Activated CD8-positive, alpha-beta T cell treated with anti-CD3 and anti-CD28 coated beads for 36 hours (primary cell): ENCODE measurements at regions of chr20 and their contacts with region 1.

Region 1: GRCh38 chr20:32207626-32208498 is at the starts of genes PLAGL2 and POFUT1:
- DNase-seq: peak; percentile 91
- ATAC-seq: peak; percentile 79
- H3K4me3 Mint-ChIP-seq: peak within 1 kb of the TSS; percentile 99
- H3K27ac Mint-ChIP-seq: peak within 1 kb of the TSS; percentile 92
- H3K4me1 Mint-ChIP-seq: peaks cover 59% of the 10 kb centered on the region
- H3K27me3 Mint-ChIP-seq: no peaks in the 10 kb centered on the region
- CTCF ChIP-seq: no peak
- total RNA-seq, gene PLAGL2: 70.6 to 71.5 TPM
- total RNA-seq, gene POFUT1: 43.7 to 46.2 TPM

Region 2: DNA sequence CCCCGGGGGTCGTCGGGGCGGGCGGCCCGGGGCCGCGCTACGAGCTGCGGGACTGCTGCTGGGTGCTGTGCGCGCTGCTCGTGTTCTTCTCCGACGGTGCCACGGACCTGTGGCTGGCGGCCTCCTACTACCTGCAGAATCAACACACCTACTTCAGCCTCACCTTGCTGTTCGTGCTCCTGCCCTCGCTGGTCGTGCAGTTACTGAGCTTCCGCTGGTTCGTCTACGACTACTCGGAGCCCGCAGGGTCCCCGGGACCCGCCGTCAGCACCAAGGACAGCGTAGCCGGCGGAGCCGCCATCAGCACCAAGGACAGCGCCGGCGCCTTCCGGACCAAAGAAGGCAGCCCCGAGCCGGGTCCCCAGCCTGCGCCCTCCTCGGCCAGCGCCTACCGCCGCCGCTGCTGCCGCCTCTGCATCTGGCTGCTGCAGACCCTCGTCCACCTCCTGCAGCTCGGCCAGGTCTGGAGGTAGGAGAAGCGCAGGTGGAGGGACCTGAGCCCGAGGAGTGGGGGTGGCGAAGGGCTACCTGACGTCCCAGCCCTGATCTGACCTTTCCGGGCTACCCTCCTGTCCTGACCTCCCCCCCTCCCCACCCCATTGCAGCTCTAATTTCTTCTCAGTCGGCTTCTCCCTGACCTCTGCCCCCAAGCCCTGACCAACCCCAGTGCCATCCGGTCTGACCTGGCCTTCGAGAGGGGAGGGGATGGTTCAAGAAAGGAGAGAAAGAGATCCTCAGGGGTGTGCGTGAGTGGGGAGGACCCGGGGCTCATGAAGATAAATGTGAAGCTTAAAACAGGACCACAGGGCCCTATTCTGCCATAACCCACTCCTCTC is 239.4 kb before region 1 on chr20:
- CTCF ChIA-PET with region 1: no interaction called
- POLR2A ChIA-PET with region 1: no interaction called
- intact Hi-C with region 1: no loop called
- DNase-seq: peak; percentile 83
- ATAC-seq: peak; percentile 96
- H3K4me3 Mint-ChIP-seq: peak overlapping the region; percentile 73
- H3K27ac Mint-ChIP-seq: no peak overlapping the region
- H3K4me1 Mint-ChIP-seq: peaks cover 3% of the 10 kb centered on the region
- H3K27me3 Mint-ChIP-seq: peaks cover 42% of the 10 kb centered on the region
- CTCF ChIP-seq: no peak

Region 3: DNA sequence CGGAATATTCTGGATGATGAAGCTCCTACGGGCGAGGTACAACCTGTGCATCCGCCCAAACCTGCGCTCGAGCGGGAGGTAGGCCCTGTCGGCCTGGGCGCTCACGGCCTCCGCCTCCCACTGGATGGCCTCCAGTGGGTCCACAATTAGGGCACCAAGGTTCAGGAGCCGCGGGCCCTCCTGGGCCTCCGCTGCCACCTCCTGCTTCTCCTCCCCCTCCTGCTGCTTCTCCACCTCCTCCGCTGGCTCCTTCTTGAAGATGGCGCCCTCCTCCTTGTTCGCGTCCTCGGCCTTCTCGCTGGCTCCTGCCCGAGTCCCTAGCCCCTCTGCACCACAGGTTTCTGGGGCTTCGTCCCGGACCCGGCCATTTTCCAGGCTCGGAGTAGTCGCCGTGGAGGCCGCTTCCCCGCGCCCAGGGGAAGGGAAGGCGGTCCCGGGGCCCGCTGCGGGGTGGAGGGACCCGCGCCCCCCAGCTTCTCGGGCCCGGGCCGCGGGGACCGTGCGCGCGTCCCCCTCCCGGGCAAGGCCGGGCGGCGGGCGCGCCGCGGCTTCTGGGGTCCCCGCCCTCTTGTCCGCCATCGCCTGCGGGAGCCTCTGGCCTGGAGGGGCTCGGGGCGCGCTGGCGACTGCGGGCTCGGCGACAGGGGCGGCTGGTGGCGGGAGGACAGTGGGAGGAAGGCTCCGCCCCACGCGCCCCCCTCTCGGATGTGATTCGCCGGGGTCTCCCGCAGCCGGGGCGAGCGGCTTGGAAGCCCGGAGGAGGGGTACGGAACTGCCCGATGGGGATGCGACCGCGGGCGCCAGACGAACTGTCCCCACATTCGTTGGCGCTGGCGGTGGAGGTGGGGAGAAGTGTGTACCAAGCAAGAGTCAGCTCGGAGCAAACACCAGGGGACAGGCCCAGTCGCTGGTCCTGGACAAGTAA is 17.9 kb before region 1 on chr20:
- CTCF ChIA-PET with region 1: no interaction called
- POLR2A ChIA-PET with region 1: interaction called, 60 read pairs
- intact Hi-C with region 1: no loop called
- DNase-seq: peak; percentile 63
- ATAC-seq: peak; percentile 48
- H3K4me3 Mint-ChIP-seq: peak overlapping the region; percentile 71
- H3K27ac Mint-ChIP-seq: peak overlapping the region; percentile 86
- H3K4me1 Mint-ChIP-seq: peaks cover 54% of the 10 kb centered on the region
- H3K27me3 Mint-ChIP-seq: no peaks in the 10 kb centered on the region
- CTCF ChIP-seq: no peak

Region 4: GRCh38 chr20:32231847-32232246 is 24.0 kb after region 1 on chr20:
- CTCF ChIA-PET with region 1: no interaction called
- POLR2A ChIA-PET with region 1: interaction called, 16 read pairs
- intact Hi-C with region 1: no loop called
- DNase-seq: peak; percentile 63
- ATAC-seq: peak; percentile 87
- H3K4me3 Mint-ChIP-seq: peak overlapping the region; percentile 54
- H3K27ac Mint-ChIP-seq: peak overlapping the region; percentile 97
- H3K4me1 Mint-ChIP-seq: peaks cover 38% of the 10 kb centered on the region
- H3K27me3 Mint-ChIP-seq: no peaks in the 10 kb centered on the region
- CTCF ChIP-seq: no peak

Region 5: DNA sequence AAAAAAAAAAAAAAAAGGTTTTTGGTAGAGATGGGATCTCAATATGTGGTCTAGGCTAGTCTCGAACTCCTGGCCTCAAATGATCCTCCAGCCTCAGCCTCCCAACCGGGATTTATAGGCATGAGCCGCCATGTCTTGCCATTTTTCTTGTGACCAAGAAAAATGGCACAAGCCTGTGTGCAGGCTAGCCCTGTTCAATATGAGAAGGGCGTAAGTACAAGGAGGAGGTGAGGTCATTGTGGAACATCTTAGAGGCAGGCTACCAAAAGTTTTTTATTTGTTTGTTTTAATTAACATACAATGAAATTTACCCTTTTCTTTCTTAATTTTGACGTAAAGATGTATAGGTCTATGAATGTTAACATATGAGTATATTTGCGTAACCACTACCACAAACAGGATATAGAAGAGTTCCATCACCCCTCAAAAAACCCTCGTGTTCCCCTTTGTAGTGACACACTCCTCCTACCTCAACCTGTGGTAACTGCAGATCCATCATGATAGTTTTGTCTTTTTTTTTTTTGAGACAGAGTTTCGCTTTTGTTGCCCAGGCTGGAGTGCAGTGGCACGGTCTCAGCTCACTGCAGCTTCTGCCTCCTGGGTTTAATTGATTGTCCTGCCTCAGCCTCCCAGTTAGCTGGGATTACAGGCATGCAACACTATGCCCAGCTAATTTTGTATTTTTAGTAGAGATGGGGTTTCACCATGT is 41.3 kb after region 1 on chr20:
- CTCF ChIA-PET with region 1: no interaction called
- POLR2A ChIA-PET with region 1: interaction called, 4 read pairs
- intact Hi-C with region 1: loop called (anchors 2 kb)
- DNase-seq: peak; percentile 67
- ATAC-seq: peak; percentile 65
- H3K4me3 Mint-ChIP-seq: peak overlapping the region; percentile 15
- H3K27ac Mint-ChIP-seq: peak overlapping the region; percentile 97
- H3K4me1 Mint-ChIP-seq: peaks cover 60% of the 10 kb centered on the region
- H3K27me3 Mint-ChIP-seq: no peaks in the 10 kb centered on the region
- CTCF ChIP-seq: no peak

Region 6: GRCh38 chr20:32285621-32286371 is 77.9 kb after region 1 on chr20:
- CTCF ChIA-PET with region 1: interaction called, 3 read pairs
- POLR2A ChIA-PET with region 1: interaction called, 10 read pairs
- intact Hi-C with region 1: loop called (anchors 5 kb)
- DNase-seq: peak; percentile 79
- ATAC-seq: peak; percentile 89
- H3K4me3 Mint-ChIP-seq: peak overlapping the region; percentile 61
- H3K27ac Mint-ChIP-seq: peak overlapping the region; percentile 93
- H3K4me1 Mint-ChIP-seq: peaks cover 75% of the 10 kb centered on the region
- H3K27me3 Mint-ChIP-seq: no peaks in the 10 kb centered on the region
- CTCF ChIP-seq: no peak

Region 7: GRCh38 chr20:32336918-32337347 is 129.1 kb after region 1 on chr20:
- CTCF ChIA-PET with region 1: no interaction called
- POLR2A ChIA-PET with region 1: interaction called, 10 read pairs
- intact Hi-C with region 1: no loop called
- DNase-seq: no peak
- ATAC-seq: no peak
- H3K4me3 Mint-ChIP-seq: no peak overlapping the region
- H3K27ac Mint-ChIP-seq: peak overlapping the region; percentile 65
- H3K4me1 Mint-ChIP-seq: peaks cover 40% of the 10 kb centered on the region
- H3K27me3 Mint-ChIP-seq: no peaks in the 10 kb centered on the region
- CTCF ChIP-seq: peak; percentile 67

Region 8: GRCh38 chr20:32357869-32358631 is 150.2 kb after region 1 on chr20 and contains the start of gene ASXL1:
- CTCF ChIA-PET with region 1: interaction called, 8 read pairs
- POLR2A ChIA-PET with region 1: interaction called, 47 read pairs
- intact Hi-C with region 1: loop called (anchors 2 kb)
- DNase-seq: peak; percentile 97
- ATAC-seq: peak; percentile 85
- H3K4me3 Mint-ChIP-seq: peak within 1 kb of the TSS; percentile 96
- H3K27ac Mint-ChIP-seq: peak within 1 kb of the TSS; percentile 100
- H3K4me1 Mint-ChIP-seq: peaks cover 59% of the 10 kb centered on the region
- H3K27me3 Mint-ChIP-seq: no peaks in the 10 kb centered on the region
- CTCF ChIP-seq: no peak
- total RNA-seq, gene ASXL1: 129 to 137 TPM

Region 9: DNA sequence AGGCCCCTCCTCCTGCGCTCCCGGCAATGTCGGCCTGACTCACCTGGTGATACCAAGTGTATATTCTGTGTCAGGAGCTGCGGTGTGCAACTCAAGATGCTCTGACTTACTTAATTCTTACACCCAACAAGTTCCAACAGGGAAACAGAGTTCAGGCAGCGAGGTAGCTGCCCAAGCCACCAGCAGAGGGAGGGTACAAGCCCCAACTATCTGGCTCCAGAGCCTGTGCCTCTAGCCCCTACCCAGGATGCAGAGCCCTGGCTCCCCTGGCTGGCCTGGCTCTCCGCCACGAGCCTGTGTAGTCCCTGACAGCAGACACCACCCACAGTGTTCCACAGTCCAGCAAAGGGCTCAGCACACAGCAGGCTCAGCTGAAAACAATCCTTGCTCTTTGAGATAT is 431.0 kb after region 1 on chr20:
- CTCF ChIA-PET with region 1: no interaction called
- POLR2A ChIA-PET with region 1: no interaction called
- intact Hi-C with region 1: no loop called
- DNase-seq: no peak
- ATAC-seq: no peak
- H3K4me3 Mint-ChIP-seq: no peak overlapping the region
- H3K27ac Mint-ChIP-seq: no peak overlapping the region
- H3K4me1 Mint-ChIP-seq: no peaks in the 10 kb centered on the region
- H3K27me3 Mint-ChIP-seq: no peaks in the 10 kb centered on the region
- CTCF ChIP-seq: no peak